Activated T-helper 1 cell treated with anti-CD3 and anti-CD28 coated beads, Interleukin-12 subunit alpha, Interleukin-12 subunit beta, Interleukin-2, Interleukin-4 antibody, amounts not matched to agents 30 ng/mL and 10 ng/mL and 1 ng/mL, durations not matched to agents 14 hours and 24 hours and 36 hours (primary cell): ENCODE measurements at regions of chr3 and their contacts with region 1.

Region 1: DNA sequence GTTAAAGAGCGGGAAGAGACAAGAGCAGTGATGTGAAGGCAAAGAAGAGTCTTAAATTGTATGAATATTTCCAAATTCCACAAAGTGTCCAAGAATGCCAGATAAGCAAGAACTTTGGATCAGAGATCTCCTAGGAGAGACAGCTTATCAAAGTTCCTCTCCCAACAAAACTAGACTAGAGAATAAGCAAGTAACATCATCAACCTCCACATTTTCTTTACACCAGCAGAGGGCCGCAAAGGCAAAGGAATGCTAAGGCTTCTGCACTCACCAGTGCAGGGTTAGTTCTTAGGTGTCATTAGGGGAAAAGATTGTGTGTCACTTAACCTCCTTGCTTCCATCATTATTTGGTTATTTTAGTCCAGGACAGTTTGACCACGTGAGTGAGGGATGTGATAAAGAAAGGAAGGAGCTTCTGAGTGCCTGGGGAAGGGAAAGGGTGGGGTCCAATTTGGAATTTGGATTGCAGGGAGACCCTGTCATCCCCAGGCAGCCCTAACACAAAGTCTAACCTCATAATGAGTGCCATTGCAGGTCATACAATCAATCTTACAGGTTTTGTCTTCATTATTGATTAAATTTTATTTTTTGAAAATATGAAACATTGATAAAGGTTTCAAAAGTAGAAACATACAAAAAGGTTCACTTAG is 7.5 kb upstream of the CMTM6 start:
- DNase-seq: peak; percentile 54
- H3K4me3 Mint-ChIP-seq: no peak overlapping the region
- H3K27ac Mint-ChIP-seq: no peak overlapping the region
- H3K4me1 Mint-ChIP-seq: no peaks in the 10 kb centered on the region
- H3K27me3 Mint-ChIP-seq: peaks cover 3% of the 10 kb centered on the region

Region 2: GRCh38 chr3:32667122-32667521 is 156.9 kb after region 1 on chr3:
- intact Hi-C with region 1: loop called (anchors 1 kb)
- DNase-seq: no peak
- H3K4me3 Mint-ChIP-seq: no peak overlapping the region
- H3K27ac Mint-ChIP-seq: no peak overlapping the region
- H3K4me1 Mint-ChIP-seq: no peaks in the 10 kb centered on the region
- H3K27me3 Mint-ChIP-seq: peaks cover 15% of the 10 kb centered on the region

Region 3: GRCh38 chr3:32934150-32934742 is 424.0 kb after region 1 on chr3:
- intact Hi-C with region 1: loop called (anchors 1 kb)
- DNase-seq: no peak
- H3K4me3 Mint-ChIP-seq: no peak overlapping the region
- H3K27ac Mint-ChIP-seq: no peak overlapping the region
- H3K4me1 Mint-ChIP-seq: no peaks in the 10 kb centered on the region
- H3K27me3 Mint-ChIP-seq: peaks cover 2% of the 10 kb centered on the region